Right lobe of liver (tissue), 6 donors: ENCODE measurements at regions of chr9 and their contacts with region 1.

Region 1: GRCh38 chr9:17116400-17116837 is 18.4 kb upstream of the CNTLN start:
- DNase-seq: no peak
- ATAC-seq: peak; percentile 76 to 91 (median 84)
- H3K4me3 ChIP-seq: no peak overlapping the region
- H3K27ac ChIP-seq: no peak overlapping the region
- H3K4me1 ChIP-seq: peaks cover 0 to 7% (median 1%) of the 10 kb centered on the region in 4 donors
- H3K27me3 ChIP-seq: no peaks in the 10 kb centered on the region
- CTCF ChIP-seq: peak; percentile 46 to 66 (median 55)
- POLR2A ChIP-seq: no peak

Region 2: DNA sequence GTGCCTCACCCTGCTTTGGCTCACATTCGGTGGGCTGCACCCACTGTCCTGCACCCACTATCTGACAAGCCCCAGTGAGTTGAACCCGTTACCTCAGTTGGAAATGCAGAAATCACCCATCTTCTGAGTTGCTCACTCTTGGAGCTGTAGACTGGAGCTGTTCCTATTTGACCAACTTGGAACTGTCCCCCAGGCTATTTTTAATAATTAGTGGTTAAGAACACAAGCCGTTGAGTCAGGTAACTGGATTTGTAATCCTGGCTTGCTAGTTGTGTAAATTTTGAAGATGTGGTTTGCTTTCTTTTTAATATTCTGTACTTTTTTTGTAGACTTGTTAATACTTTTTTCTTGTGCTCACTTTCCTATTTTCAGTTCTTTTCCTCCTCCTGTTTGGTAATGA is 99.6 kb after region 1 on chr9:
- intact Hi-C with region 1: no loop called
- DNase-seq: no peak
- ATAC-seq: peak in 1 of 4 donors; percentile 19
- H3K4me3 ChIP-seq: no peak overlapping the region
- H3K27ac ChIP-seq: no peak overlapping the region
- H3K4me1 ChIP-seq: no peaks in the 10 kb centered on the region
- H3K27me3 ChIP-seq: no peaks in the 10 kb centered on the region
- CTCF ChIP-seq: no peak
- POLR2A ChIP-seq: no peak

Region 3: DNA sequence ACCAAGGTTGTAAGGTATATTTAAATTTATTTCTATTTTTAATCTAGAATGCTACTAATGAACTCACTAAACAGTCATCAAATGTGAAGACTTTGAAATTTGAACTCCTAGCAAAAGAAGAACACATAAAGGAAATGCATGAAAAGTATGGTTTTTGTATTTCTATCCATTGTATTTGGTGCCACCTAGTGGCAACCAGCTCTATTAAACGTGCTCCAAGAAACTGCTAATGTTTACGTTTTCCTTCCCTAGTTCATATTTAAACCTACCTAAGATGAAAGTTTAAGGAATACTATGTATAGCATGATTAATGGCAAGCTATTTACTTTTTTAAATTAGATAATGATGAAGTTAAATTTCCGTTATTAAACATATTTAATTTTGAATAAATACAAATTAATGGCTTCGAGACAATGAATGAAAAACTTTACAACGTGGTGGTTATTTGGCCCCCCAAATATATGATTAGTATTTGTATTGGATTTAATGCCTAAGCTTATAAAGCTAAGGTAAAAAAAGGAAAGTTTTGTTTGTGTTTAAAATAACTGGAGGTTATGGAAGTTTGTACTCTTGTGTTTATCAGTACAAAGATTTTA is 346.5 kb after region 1 on chr9:
- intact Hi-C with region 1: loop called in 1 of 2 experiments (anchors 10 kb)
- DNase-seq: no peak
- ATAC-seq: peak; percentile 70 to 80 (median 78)
- H3K4me3 ChIP-seq: no peak overlapping the region
- H3K27ac ChIP-seq: no peak overlapping the region
- H3K4me1 ChIP-seq: no peaks in the 10 kb centered on the region
- H3K27me3 ChIP-seq: no peaks in the 10 kb centered on the region
- CTCF ChIP-seq: peak; percentile 75 to 83 (median 77)
- POLR2A ChIP-seq: no peak